SK-N-SH (cell line): ENCODE measurements at regions of chr9 and their contacts with region 1.

Region 1: GRCh38 chr9:124617471-124618141 is 110.4 kb upstream of the NR5A1 start:
- DNase-seq: peak; percentile 78
- H3K4me3 ChIP-seq: no peak overlapping the region; a peak in 1 of 4 replicates
- H3K27ac ChIP-seq: no peak overlapping the region
- H3K4me1 ChIP-seq: peaks cover 8 to 10% of the 10 kb centered on the region in 2 experiments
- H3K27me3 ChIP-seq: no peaks in the 10 kb centered on the region
- CTCF ChIP-seq: peak; percentile 95
- EP300 ChIP-seq: no peak
- RAD21 ChIP-seq: peak; percentile 99

Region 2: GRCh38 chr9:124593651-124594058 is 24.0 kb before region 1 on chr9:
- CTCF ChIA-PET with region 1: interaction called, 45 read pairs
- POLR2A ChIA-PET with region 1: no interaction called
- DNase-seq: no peak
- H3K4me3 ChIP-seq: no peak overlapping the region
- H3K27ac ChIP-seq: no peak overlapping the region
- H3K4me1 ChIP-seq: peaks cover 8 to 19% of the 10 kb centered on the region in 2 experiments; a peak in 3 of 4 replicates
- H3K27me3 ChIP-seq: no peaks in the 10 kb centered on the region
- CTCF ChIP-seq: no peak
- EP300 ChIP-seq: no peak
- RAD21 ChIP-seq: no peak

Region 3: DNA sequence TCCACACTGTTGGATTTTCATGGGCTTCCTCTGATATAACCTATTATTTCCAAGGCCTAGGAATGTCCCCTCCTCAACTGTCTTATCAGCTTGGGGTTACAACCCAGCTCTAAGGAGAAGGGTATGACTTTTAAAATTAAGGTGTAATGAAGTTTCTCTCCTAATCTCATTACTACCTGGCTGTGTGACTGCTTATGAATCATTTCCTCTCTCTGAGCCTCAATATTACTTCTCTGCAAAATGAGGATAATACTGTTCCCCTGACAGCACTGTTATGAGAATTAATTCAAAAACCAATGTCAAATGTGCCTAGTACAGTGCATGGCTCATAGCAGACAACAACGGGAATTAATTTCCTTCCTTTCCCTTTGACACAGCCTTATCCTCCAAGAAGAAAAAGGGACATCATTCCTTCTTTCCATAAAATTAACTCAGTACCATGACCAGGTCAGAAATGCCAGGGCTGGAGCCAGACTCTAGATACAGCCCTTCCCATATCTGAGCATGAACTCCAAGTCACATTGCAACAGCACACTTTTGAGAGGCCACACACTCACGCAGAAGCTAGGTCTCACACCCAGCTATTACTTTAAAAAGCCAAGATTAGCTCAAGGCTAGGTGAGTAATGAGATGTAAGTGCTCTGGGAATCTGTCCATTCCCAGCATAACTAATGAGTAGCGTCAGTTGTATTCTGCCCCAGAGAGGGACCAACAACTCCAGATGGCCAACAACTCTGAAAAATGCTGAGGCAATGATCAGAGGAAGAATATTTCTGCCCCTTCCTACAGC is 34.8 kb after region 1 on chr9:
- CTCF ChIA-PET with region 1: interaction called, 52 read pairs
- POLR2A ChIA-PET with region 1: no interaction called
- DNase-seq: peak; percentile 23
- H3K4me3 ChIP-seq: no peak overlapping the region
- H3K27ac ChIP-seq: peak overlapping the region; percentile 54 to 70
- H3K4me1 ChIP-seq: peaks cover 5 to 8% of the 10 kb centered on the region in 2 experiments; a peak in 2 of 4 replicates
- H3K27me3 ChIP-seq: no peaks in the 10 kb centered on the region
- CTCF ChIP-seq: no peak
- EP300 ChIP-seq: peak; percentile 10 to 45; a peak in 2 of 4 replicates
- RAD21 ChIP-seq: no peak

Region 4: DNA sequence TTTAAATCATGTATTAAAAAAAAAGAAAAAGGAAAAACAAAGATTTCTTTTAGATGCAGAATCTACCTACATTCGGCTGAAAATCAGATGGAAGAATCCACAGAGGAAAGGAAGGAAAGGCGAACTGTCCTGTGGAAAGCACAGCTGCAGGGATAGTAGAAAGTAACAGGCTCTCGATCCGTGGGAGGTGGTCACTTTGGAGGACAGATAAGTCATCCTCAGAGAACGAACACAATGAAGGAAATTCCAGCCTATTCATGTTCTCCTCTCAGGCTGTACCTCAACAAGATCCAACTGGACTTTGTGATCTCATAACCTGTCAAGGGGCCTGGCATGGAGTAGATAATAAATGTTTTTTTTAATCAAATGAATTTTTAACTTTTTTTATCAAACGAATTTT is 80.7 kb after region 1 on chr9:
- CTCF ChIA-PET with region 1: interaction called, 10 read pairs
- POLR2A ChIA-PET with region 1: no interaction called
- DNase-seq: peak; percentile 6
- H3K4me3 ChIP-seq: peak overlapping the region in 1 of 2 experiments; percentile 48; a peak in 2 of 4 replicates
- H3K27ac ChIP-seq: peak overlapping the region; percentile 77 to 91
- H3K4me1 ChIP-seq: peaks cover 16 to 35% of the 10 kb centered on the region in 2 experiments
- H3K27me3 ChIP-seq: no peaks in the 10 kb centered on the region
- CTCF ChIP-seq: no peak
- EP300 ChIP-seq: no peak
- RAD21 ChIP-seq: no peak

Region 5: GRCh38 chr9:124754289-124754688 is 136.7 kb after region 1 on chr9:
- CTCF ChIA-PET with region 1: interaction called, 23 read pairs
- POLR2A ChIA-PET with region 1: no interaction called
- DNase-seq: peak; percentile 31
- H3K4me3 ChIP-seq: no peak overlapping the region
- H3K27ac ChIP-seq: peak overlapping the region in 1 of 2 experiments; percentile 78; a peak in 2 of 4 replicates
- H3K4me1 ChIP-seq: peaks cover 7 to 56% of the 10 kb centered on the region in 2 experiments
- H3K27me3 ChIP-seq: no peaks in the 10 kb centered on the region
- CTCF ChIP-seq: peak; percentile 74
- EP300 ChIP-seq: no peak
- RAD21 ChIP-seq: peak; percentile 72

Region 6: DNA sequence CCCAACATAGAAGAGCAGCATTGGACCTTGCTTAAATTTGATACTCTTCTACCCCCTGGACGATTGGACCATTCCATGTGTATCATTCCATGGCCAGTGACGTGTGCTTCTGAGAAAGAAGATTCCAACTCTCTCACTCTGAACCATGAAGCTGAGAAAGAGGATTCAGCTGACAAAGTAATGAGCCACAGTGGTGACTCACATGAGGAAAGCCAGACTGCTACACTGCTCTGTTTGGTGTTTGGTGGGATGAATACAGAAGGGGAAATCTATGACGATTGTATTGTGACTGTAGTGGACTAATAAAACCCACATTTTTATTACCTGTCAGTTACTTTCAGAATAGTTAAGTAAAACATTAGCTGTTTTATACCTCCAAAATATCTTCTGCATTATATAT is 616.1 kb after region 1 on chr9:
- CTCF ChIA-PET with region 1: no interaction called
- POLR2A ChIA-PET with region 1: no interaction called
- DNase-seq: no peak
- H3K4me3 ChIP-seq: no peak overlapping the region
- H3K27ac ChIP-seq: peak overlapping the region in 1 of 2 experiments; percentile 96; a peak in 2 of 4 replicates
- H3K4me1 ChIP-seq: peaks cover 9 to 20% of the 10 kb centered on the region in 2 experiments
- H3K27me3 ChIP-seq: no peaks in the 10 kb centered on the region
- CTCF ChIP-seq: no peak
- EP300 ChIP-seq: peak in 1 of 2 experiments; percentile 31; a peak in 1 of 4 replicates
- RAD21 ChIP-seq: no peak